ENCODE measurements at regions of chr2 and their contacts with region 1.

Region 1: DNA sequence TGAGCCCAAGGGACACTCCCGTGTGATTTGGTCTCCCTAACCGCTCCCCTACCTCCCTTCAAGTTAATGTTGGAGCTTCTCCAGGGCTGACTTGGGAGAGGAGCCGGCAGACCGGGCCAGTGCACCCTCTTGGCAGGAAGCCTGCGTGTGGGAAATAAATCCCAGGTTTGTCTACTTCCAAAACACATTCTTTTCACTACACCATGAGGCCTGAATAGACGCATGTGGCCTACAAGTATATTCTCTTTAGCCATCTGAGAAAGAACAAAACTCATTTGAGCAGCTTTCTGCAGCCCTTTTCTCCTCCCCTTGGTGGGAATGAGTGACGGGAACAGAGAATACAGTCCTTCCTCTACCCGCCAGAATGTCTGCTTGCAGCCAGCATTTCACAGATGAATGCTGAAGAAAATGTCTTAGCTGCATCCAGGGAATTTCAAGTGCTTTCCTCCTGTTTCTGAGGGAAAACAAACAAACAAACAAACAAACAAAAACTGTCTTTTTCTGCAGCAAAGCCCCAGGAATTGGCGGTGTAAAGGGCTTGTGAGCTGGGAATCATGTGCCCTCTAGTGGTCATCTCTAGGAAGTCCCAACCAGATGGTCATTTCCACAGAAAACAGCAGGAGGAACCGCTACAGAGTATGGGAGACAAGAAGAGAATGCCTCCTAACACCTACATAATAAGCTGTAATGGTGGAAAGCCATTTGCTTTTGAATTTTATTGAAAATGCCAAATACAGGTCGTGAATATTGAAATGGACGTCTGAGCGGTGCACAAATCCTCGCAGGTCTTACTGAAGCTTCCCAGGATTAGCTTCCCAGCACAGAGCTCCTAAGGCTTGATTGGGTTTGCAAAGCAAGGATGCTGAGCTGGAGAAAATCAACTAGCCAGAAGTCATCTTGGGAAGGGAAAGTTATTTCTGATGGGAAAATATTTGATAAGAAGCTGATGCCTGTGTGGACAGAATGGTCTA is 41.2 kb upstream of the DAPL1 start:
- DNase-seq: peak; percentile 70 to 71
- ATAC-seq: peak; percentile 90 to 96
- H3K4me3 ChIP-seq: no peak overlapping the region
- H3K27ac ChIP-seq: no peak overlapping the region
- H3K4me1 ChIP-seq: no peaks in the 10 kb centered on the region
- CTCF ChIP-seq: peak; percentile 92
- EP300 ChIP-seq: no peak
- POLR2A ChIP-seq: no peak
- RAD21 ChIP-seq: peak; percentile 86 to 89

Region 2: DNA sequence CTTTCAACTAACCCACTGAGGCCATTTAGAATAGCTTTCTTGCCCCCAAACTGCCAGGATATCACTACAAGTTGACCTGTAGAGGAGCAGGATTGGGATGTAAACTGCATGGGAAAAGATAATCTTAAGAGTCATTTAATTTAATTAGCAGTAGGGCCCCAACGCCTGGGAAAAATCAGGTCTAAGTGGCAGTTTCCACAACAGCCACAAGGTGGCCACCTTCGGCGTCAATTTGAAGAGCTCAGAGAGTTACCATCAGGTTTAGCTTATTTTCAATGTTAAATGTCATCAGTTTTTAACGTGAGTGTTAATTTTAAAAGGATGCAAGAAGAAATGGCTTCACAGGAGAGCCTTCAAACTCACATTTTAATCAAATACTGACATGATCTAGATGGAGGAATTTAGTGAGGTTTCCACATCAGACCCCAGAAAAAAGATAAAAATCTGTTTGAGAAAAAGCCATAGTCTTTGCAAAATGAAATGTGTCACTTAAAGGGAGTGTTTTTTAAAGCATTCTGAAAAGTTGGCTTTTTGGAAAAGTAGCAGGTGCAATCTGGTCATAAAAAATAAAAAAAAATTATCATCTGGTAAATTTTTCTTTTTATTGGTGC is 729.5 kb before region 1 on chr2:
- CTCF ChIA-PET with region 1: interaction called, 254 read pairs
- POLR2A ChIA-PET with region 1: no interaction called
- DNase-seq: peak; percentile 18 to 39
- ATAC-seq: peak; percentile 59 to 89; a peak in 3 of 6 replicates
- H3K4me3 ChIP-seq: no peak overlapping the region
- H3K27ac ChIP-seq: no peak overlapping the region
- H3K4me1 ChIP-seq: no peaks in the 10 kb centered on the region
- CTCF ChIP-seq: peak; percentile 81
- EP300 ChIP-seq: no peak
- POLR2A ChIP-seq: no peak
- RAD21 ChIP-seq: peak; percentile 77 to 78

Region 3: GRCh38 chr2:158034199-158034866 is 719.6 kb before region 1 on chr2:
- CTCF ChIA-PET with region 1: interaction called, 254 read pairs
- POLR2A ChIA-PET with region 1: no interaction called
- DNase-seq: peak; percentile 26 to 75
- ATAC-seq: peak; percentile 95 to 98
- H3K4me3 ChIP-seq: no peak overlapping the region
- H3K27ac ChIP-seq: no peak overlapping the region
- H3K4me1 ChIP-seq: no peaks in the 10 kb centered on the region
- CTCF ChIP-seq: peak; percentile 68
- EP300 ChIP-seq: no peak
- POLR2A ChIP-seq: no peak
- RAD21 ChIP-seq: peak; percentile 79 to 83

Region 4: DNA sequence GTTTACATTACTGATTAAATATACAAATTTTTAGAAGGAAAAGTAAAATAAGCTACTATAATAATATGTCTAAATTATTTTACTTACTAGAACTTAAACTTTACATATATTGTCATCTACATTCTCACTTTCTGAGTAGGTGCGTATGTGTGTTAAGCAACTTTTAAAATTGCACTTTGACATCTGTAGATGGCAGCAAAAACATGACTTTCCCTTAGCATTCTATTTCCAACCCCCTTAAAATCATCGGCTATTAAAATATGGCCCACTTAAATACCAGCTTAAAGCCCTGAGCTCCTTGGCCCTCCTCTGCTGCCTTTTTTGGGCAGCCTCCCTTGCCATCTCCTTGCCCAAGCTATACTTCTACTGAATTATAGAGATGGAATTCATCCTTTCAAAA is 574.3 kb before region 1 on chr2:
- CTCF ChIA-PET with region 1: interaction called, 29 read pairs
- POLR2A ChIA-PET with region 1: no interaction called
- DNase-seq: peak in 1 of 2 experiments; percentile 18
- ATAC-seq: peak; percentile 54 to 74; a peak in 3 of 6 replicates
- H3K4me3 ChIP-seq: no peak overlapping the region
- H3K27ac ChIP-seq: no peak overlapping the region
- H3K4me1 ChIP-seq: no peaks in the 10 kb centered on the region
- CTCF ChIP-seq: peak; percentile 59
- EP300 ChIP-seq: no peak
- POLR2A ChIP-seq: no peak
- RAD21 ChIP-seq: peak; percentile 68 to 72

Region 5: DNA sequence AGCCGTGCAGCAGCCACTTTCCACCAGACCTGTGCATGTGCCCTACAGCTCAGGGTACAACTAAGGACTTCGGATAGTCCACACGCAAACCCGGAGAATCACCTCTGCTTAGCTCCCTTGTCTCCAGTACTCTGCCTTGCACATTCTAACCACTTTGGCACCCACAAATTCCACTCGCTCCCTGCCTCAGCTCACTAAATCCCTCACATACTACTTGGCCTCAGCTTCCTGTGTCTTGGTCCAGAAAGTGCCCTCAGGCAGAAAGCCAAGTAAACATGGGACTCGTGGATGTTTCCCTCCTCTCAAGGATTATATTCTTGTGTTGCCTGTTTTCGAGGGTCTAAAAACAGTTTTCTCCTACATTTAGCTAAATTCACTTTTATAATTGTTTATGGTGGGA is 116.6 kb before region 1 on chr2:
- CTCF ChIA-PET with region 1: no interaction called
- POLR2A ChIA-PET with region 1: no interaction called
- DNase-seq: no peak
- ATAC-seq: no peak
- H3K4me3 ChIP-seq: no peak overlapping the region
- H3K27ac ChIP-seq: no peak overlapping the region
- H3K4me1 ChIP-seq: no peaks in the 10 kb centered on the region
- CTCF ChIP-seq: no peak
- EP300 ChIP-seq: no peak
- POLR2A ChIP-seq: no peak
- RAD21 ChIP-seq: no peak

Region 6: GRCh38 chr2:158723917-158724690 is 29.8 kb before region 1 on chr2:
- CTCF ChIA-PET with region 1: interaction called, 56 read pairs
- POLR2A ChIA-PET with region 1: no interaction called
- DNase-seq: peak; percentile 84 to 89
- ATAC-seq: peak; percentile 82 to 92
- H3K4me3 ChIP-seq: peak overlapping the region; percentile 34
- H3K27ac ChIP-seq: peak overlapping the region; percentile 71 to 85
- H3K4me1 ChIP-seq: peaks cover 32% of the 10 kb centered on the region
- CTCF ChIP-seq: peak; percentile 59
- EP300 ChIP-seq: no peak
- POLR2A ChIP-seq: no peak
- RAD21 ChIP-seq: peak; percentile 31 to 42; a peak in 3 of 5 replicates

Region 7: DNA sequence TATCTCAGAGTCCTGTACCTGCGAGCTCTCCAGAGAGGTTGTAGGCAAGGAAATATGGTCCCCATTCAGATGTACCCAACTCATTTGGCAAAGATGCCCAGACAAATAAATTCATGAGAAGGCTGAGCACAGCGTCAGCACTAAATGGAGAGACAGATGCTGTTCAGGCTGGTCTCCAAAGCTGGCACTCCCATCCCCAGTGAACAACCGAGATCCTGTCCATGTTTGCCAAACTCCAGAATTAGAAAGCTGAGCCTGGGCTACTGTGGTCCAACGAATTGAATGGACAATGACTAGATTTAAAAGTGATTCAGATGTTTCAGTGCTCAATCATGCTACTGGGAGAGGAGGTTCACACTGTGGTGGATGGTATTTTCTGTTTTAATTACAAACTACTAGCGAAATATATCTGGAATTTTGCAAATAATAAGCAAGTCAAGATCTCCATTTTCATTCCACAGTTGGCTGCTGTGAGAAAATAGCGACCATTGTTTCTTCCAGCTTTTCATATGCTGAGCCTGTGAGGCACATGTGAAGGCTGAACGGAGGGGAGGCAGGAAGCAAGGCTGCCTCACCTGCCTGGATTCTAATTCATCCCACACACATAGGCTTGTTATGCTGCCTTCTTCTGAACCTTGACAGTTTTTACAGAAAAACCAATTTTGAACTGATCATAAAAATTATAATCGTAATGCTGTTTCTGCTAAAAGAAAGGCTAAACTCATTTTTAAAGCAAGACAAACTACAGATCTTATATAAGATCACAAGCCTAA is 18.6 kb after region 1 on chr2:
- CTCF ChIA-PET with region 1: interaction called, 61 read pairs
- POLR2A ChIA-PET with region 1: no interaction called
- DNase-seq: no peak
- ATAC-seq: no peak
- H3K4me3 ChIP-seq: no peak overlapping the region
- H3K27ac ChIP-seq: no peak overlapping the region
- H3K4me1 ChIP-seq: no peaks in the 10 kb centered on the region
- CTCF ChIP-seq: no peak
- EP300 ChIP-seq: no peak
- POLR2A ChIP-seq: no peak
- RAD21 ChIP-seq: no peak